Ascending aorta (tissue), 2 donors: ENCODE measurements at regions of chr5 and their contacts with region 1.

Region 1: GRCh38 chr5:4640795-4641194 is 499.3 kb upstream of the ADAMTS16 start:
- DNase-seq: no peak
- H3K4me3 ChIP-seq: no peak overlapping the region
- H3K27ac ChIP-seq: no peak overlapping the region
- H3K4me1 ChIP-seq: no peaks in the 10 kb centered on the region
- H3K27me3 ChIP-seq: no peaks in the 10 kb centered on the region
- CTCF ChIP-seq: no peak

Region 2: DNA sequence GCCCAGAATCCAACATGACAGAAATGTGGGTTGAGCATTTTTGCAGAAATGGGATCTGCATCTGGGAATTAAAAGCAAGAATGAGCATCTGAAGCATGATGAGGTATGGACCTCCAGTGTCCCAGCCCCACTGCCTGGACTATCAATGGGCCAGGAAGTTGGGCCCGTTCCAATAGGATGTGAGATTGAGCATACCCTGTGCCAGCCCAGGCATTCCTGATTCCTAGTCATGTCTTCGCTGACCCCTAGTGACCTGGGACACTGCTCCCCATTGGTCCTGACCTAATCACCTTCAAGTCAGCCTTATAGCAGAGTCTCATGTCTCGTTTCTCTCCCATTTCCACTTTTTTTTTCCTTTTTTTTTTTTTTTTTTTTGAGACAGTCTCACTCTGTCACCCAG is 1691.9 kb before region 1 on chr5:
- intact Hi-C with region 1: loop called (anchors 5 kb)
- DNase-seq: no peak
- H3K4me3 ChIP-seq: no peak overlapping the region
- H3K27ac ChIP-seq: no peak overlapping the region
- H3K4me1 ChIP-seq: no peaks in the 10 kb centered on the region
- H3K27me3 ChIP-seq: no peaks in the 10 kb centered on the region
- CTCF ChIP-seq: no peak

Region 3: DNA sequence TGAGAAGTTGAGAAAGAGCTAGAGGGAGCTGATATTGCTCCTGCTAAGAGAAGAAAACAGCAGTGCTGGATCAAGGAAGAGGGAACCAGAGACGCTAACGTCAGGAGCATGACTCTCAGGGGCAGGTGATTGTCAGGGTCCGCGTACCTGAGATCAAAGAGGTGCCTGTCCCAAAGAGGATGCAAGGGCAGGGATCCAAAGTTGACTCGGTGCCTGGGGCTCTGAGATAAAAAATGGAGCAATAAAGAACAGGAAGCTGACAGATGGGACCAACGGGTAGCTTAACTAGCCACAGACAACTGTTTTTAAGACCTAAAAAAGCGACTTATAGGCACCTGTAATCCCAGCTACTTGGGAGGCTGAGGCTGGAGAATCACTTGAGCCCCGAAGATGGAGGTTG is 527.4 kb before region 1 on chr5:
- intact Hi-C with region 1: no loop called
- DNase-seq: no peak
- H3K4me3 ChIP-seq: no peak overlapping the region
- H3K27ac ChIP-seq: no peak overlapping the region
- H3K4me1 ChIP-seq: no peaks in the 10 kb centered on the region
- H3K27me3 ChIP-seq: no peaks in the 10 kb centered on the region
- CTCF ChIP-seq: no peak

Region 4: GRCh38 chr5:5014586-5015235 is 373.9 kb after region 1 on chr5:
- intact Hi-C with region 1: no loop called
- DNase-seq: no peak
- H3K4me3 ChIP-seq: no peak overlapping the region
- H3K27ac ChIP-seq: no peak overlapping the region
- H3K4me1 ChIP-seq: no peaks in the 10 kb centered on the region
- H3K27me3 ChIP-seq: no peaks in the 10 kb centered on the region
- CTCF ChIP-seq: no peak